Caco-2 (cell line): ENCODE measurements at regions of chr19 and their contacts with region 1.

Region 1: GRCh38 chr19:35140962-35141637 is 2.0 kb upstream of the FXYD7 start:
- DNase-seq: peak; percentile 79 to 85
- H3K4me3 ChIP-seq: no peak overlapping the region
- H3K4me3 Mint-ChIP-seq: no peak overlapping the region
- H3K27ac Mint-ChIP-seq: no peak overlapping the region
- H3K4me1 ChIP-seq: peaks cover 16% of the 10 kb centered on the region; the same call in 1 of the 2 replicates
- H3K4me1 Mint-ChIP-seq: no peaks in the 10 kb centered on the region
- H3K27me3 ChIP-seq: no peaks in the 10 kb centered on the region; the same call in 1 of the 2 replicates
- H3K27me3 Mint-ChIP-seq: peaks cover 8% of the 10 kb centered on the region
- CTCF ChIP-seq: peak in 1 of 2 experiments; percentile 55

Region 2: DNA sequence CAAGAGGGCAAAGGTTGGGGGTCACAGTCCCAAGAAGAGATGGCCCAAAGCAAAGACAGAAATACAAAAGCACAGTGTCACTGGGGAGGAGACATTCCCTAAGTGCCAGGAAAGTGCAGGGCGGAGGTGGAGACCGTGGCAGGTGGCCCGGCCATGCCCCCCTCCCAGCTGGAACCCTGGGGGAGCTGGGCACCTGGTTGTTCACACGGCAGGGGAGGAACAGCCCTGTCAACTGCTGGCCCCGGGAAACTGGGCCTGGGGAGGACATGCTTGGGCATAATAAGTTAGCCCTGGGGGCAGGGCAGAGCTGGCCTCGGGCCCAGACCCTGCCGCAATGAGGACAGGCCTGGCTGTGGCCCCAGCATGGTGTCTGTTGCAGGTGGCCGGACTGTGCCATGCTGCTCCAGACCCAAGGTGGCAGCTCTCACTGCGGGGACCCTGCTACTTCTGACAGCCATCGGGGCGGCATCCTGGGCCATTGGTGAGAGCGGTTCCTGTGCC is 92.1 kb before region 1 on chr19:
- CTCF ChIA-PET with region 1: no interaction called
- POLR2A ChIA-PET with region 1: no interaction called
- intact Hi-C with region 1: no loop called
- DNase-seq: no peak
- H3K4me3 ChIP-seq: no peak overlapping the region
- H3K4me3 Mint-ChIP-seq: no peak overlapping the region
- H3K27ac Mint-ChIP-seq: no peak overlapping the region
- H3K4me1 ChIP-seq: peaks cover 3% of the 10 kb centered on the region; the same call in 1 of the 2 replicates
- H3K4me1 Mint-ChIP-seq: no peaks in the 10 kb centered on the region
- H3K27me3 ChIP-seq: no peaks in the 10 kb centered on the region
- H3K27me3 Mint-ChIP-seq: no peaks in the 10 kb centered on the region
- CTCF ChIP-seq: no peak

Region 3: GRCh38 chr19:35093941-35094646 is 47.0 kb before region 1 on chr19:
- CTCF ChIA-PET with region 1: no interaction called
- POLR2A ChIA-PET with region 1: no interaction called
- intact Hi-C with region 1: no loop called
- DNase-seq: no peak
- H3K4me3 ChIP-seq: no peak overlapping the region
- H3K4me3 Mint-ChIP-seq: no peak overlapping the region
- H3K27ac Mint-ChIP-seq: peak overlapping the region; percentile 13
- H3K4me1 ChIP-seq: peaks cover 31% of the 10 kb centered on the region
- H3K4me1 Mint-ChIP-seq: peaks cover 21% of the 10 kb centered on the region
- H3K27me3 ChIP-seq: no peaks in the 10 kb centered on the region
- H3K27me3 Mint-ChIP-seq: no peaks in the 10 kb centered on the region
- CTCF ChIP-seq: no peak

Region 4: GRCh38 chr19:35154525-35155406 is 13.7 kb after region 1 on chr19 and contains the start of gene FXYD5:
- CTCF ChIA-PET with region 1: interaction called, 10 read pairs
- POLR2A ChIA-PET with region 1: no interaction called
- intact Hi-C with region 1: no loop called
- DNase-seq: peak; percentile 47 to 67
- H3K4me3 ChIP-seq: peak within 1 kb of the TSS; percentile 66
- H3K4me3 Mint-ChIP-seq: peak within 1 kb of the TSS; percentile 96
- H3K27ac Mint-ChIP-seq: peak within 1 kb of the TSS; percentile 78
- H3K4me1 ChIP-seq: peaks cover 11% of the 10 kb centered on the region; the same call in 1 of the 2 replicates
- H3K4me1 Mint-ChIP-seq: peaks cover 13% of the 10 kb centered on the region
- H3K27me3 ChIP-seq: no peaks in the 10 kb centered on the region
- H3K27me3 Mint-ChIP-seq: peaks cover 21% of the 10 kb centered on the region
- CTCF ChIP-seq: no peak
- total RNA-seq, gene FXYD5: 20.2 and 20.4 TPM in 2 replicates